ENCODE measurements at regions of chr2 and their contacts with region 1.

Region 1: DNA sequence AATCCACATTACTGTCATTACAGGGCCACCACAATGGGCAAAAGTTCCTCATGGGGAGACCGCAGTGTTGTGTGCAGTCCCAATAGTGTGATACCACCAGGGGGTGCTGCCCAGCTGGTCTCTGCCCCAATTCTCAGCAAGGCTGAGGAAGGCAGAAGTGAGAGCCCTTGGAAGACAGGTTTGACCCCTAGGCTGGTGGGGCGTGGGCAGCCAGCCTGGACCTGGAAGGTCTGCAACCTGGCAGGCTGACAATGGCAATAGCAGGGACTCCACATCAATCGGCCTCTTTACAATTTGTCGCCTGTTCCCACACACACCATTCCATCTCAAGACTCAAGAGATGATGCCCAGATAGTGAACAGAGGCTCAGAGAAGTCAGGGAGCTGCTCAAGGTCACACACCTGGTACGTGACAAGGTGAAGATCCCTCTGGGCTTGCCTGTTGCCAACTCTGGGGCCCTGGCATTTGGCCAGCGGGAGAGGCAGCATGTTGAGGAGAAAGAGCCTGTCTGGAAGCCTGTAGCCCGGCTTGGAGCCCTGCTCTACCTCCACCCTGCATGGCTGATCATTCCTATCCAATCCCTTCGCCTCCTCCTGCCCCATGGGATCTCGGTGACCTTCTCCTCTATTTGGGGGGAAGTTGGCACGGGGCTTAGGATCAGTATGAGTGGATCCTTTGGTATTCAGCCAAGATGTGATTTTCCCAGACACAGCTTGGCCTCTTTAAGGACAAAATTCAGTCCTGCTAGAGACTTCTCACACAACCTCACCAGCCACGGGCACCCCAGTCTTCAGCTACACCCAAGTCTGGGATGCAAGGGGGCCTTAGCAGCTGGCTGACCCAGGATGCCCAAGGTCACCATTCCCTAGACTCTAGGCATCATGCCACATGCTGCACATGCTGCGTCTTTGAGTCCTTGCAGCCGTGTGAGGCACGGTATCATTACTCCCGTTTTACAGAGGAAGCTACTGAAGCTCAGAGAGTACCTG is 2.9 kb upstream of the ATOH8 start:
- DNase-seq: peak; percentile 82
- H3K4me3 ChIP-seq: no peak overlapping the region
- H3K27ac ChIP-seq: no peak overlapping the region
- H3K4me1 ChIP-seq: peaks cover 21 to 32% of the 10 kb centered on the region in 2 experiments; a peak in 3 of 4 replicates
- H3K27me3 ChIP-seq: no peaks in the 10 kb centered on the region
- CTCF ChIP-seq: peak; percentile 88
- EP300 ChIP-seq: no peak
- RAD21 ChIP-seq: peak; percentile 89

Region 2: DNA sequence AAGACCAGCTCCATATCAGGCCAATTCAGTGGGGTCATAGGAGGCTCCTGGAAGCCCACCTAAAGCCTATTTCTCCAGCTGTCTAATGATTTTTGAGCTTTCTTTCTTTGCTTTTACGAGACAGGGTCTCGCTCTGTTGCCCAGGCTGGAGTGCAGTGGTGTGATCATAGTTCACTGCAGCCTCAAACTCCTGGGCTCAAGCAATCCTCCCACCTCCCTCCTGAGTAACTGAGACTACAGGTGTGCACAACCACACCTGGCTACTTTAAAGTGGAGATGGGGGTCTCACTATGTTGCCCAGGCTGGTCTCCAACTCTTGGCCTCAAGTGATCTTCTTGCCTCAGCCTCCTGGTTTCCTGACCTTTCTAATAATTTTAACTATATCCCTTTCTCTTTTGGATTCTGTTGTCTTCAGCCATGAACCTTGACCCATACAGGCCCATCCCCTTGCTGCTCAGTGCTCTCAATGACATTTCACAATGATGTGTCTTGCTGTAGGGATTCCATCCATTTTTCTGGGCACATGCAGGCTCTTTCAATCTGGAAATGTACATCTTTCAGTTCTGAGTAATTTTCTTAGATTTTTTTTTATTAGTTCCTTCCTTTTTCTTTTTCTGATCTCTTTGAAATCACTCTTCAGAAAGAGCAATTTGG is 27.0 kb before region 1 on chr2:
- CTCF ChIA-PET with region 1: interaction called, 168 read pairs
- POLR2A ChIA-PET with region 1: no interaction called
- DNase-seq: no peak
- H3K4me3 ChIP-seq: no peak overlapping the region
- H3K27ac ChIP-seq: no peak overlapping the region
- H3K4me1 ChIP-seq: peaks cover 0 to 16% of the 10 kb centered on the region in 2 experiments; a peak in 2 of 4 replicates
- H3K27me3 ChIP-seq: no peaks in the 10 kb centered on the region
- CTCF ChIP-seq: no peak
- EP300 ChIP-seq: no peak
- RAD21 ChIP-seq: no peak

Region 3: GRCh38 chr2:85765081-85765731 is 14.3 kb after region 1 on chr2:
- CTCF ChIA-PET with region 1: interaction called, 91 read pairs
- POLR2A ChIA-PET with region 1: no interaction called
- DNase-seq: peak; percentile 60
- H3K4me3 ChIP-seq: no peak overlapping the region
- H3K27ac ChIP-seq: no peak overlapping the region
- H3K4me1 ChIP-seq: peaks cover 27 to 44% of the 10 kb centered on the region in 2 experiments; a peak in 3 of 4 replicates
- H3K27me3 ChIP-seq: no peaks in the 10 kb centered on the region
- CTCF ChIP-seq: no peak
- EP300 ChIP-seq: no peak
- RAD21 ChIP-seq: no peak

Region 4: DNA sequence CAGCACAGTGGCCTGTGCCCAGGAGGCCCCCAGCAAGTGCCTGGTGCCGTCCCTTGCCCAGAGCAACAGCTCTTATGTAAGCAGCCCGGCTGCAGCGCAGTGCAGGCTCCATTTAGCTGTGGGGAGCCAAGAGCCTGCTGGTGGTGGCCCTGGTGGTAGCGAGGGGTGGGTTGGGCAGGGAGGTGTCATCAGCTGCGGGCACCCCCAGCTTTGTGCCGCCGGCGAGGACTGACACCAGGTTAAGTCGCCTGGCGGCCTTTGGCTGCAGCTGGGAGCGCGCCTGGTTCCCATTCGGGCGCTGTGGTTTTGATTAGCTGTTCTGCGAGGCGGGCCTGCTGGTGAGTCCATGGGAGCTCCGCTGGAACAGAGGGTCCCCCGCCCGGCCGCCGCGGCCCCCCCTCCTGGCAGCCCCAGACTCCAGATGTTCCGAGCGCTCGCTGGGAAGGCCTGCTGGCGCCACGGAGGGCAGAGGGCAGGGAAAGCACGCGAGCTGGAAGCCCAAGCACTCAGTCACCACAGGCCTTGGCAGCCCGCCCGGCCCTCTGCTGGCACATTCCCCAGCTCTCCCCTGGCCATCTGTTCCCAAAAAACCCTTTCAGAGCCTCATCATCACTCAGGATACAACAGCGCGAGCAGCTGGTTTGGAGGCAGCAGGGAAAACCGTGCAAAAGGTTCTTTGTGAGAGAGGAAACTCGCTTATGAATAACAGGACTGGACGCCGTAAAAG is 21.3 kb after region 1 on chr2:
- CTCF ChIA-PET with region 1: interaction called, 77 read pairs
- POLR2A ChIA-PET with region 1: no interaction called
- DNase-seq: peak; percentile 96
- H3K4me3 ChIP-seq: peak overlapping the region; percentile 28 to 55
- H3K27ac ChIP-seq: peak overlapping the region; percentile 96 to 99
- H3K4me1 ChIP-seq: peaks cover 63 to 70% of the 10 kb centered on the region in 2 experiments
- H3K27me3 ChIP-seq: no peaks in the 10 kb centered on the region
- CTCF ChIP-seq: peak; percentile 46
- EP300 ChIP-seq: peak; percentile 92 to 100
- RAD21 ChIP-seq: peak; percentile 53

Region 5: GRCh38 chr2:85777441-85777861 is 26.6 kb after region 1 on chr2:
- CTCF ChIA-PET with region 1: interaction called, 77 read pairs
- POLR2A ChIA-PET with region 1: no interaction called
- DNase-seq: no peak
- H3K4me3 ChIP-seq: no peak overlapping the region
- H3K27ac ChIP-seq: no peak overlapping the region
- H3K4me1 ChIP-seq: peaks cover 22 to 28% of the 10 kb centered on the region in 2 experiments
- H3K27me3 ChIP-seq: no peaks in the 10 kb centered on the region
- CTCF ChIP-seq: no peak
- EP300 ChIP-seq: no peak
- RAD21 ChIP-seq: no peak

Region 6: GRCh38 chr2:85797921-85798320 is 47.0 kb after region 1 on chr2:
- CTCF ChIA-PET with region 1: interaction called, 626 read pairs
- POLR2A ChIA-PET with region 1: no interaction called
- DNase-seq: peak; percentile 72
- H3K4me3 ChIP-seq: no peak overlapping the region
- H3K27ac ChIP-seq: no peak overlapping the region
- H3K4me1 ChIP-seq: peaks cover 23 to 27% of the 10 kb centered on the region in 2 experiments; a peak in 3 of 4 replicates
- H3K27me3 ChIP-seq: no peaks in the 10 kb centered on the region
- CTCF ChIP-seq: peak; percentile 66
- EP300 ChIP-seq: no peak
- RAD21 ChIP-seq: peak; percentile 79

Measured in SK-N-SH (cell line).